ENCODE measurements at regions of chr9 and their contacts with region 1.

Region 1: DNA sequence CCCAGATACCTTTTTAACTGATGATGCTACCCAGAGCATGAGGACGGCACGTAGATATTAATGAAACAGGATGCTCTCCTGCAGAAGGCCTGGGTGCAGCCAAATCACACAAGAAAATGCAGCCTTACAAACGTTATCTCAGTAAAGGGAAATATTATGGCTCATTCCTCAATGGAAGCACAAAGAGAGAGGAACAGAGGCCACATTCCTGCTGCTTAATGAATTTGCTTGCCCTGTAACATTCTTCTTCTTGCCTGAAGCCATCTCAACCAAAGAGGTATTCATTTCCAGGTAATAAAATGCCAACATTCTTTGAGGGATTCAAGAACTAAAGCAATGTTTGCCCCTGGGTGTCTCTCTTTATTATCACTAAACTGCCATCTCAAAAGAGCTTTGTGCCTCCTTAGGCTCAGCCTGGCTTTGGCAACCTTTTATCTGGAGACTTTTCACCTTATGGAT is 93.0 kb downstream of the TNC start:
- DNase-seq: peak; percentile 52 to 68
- H3K4me3 ChIP-seq: no peak overlapping the region
- H3K4me3 Mint-ChIP-seq: no peak overlapping the region
- H3K27ac Mint-ChIP-seq: peak overlapping the region; percentile 62
- H3K4me1 ChIP-seq: peaks cover 58% of the 10 kb centered on the region
- H3K4me1 Mint-ChIP-seq: peaks cover 43% of the 10 kb centered on the region
- H3K27me3 ChIP-seq: no peaks in the 10 kb centered on the region
- H3K27me3 Mint-ChIP-seq: no peaks in the 10 kb centered on the region
- CTCF ChIP-seq: no peak

Region 2: GRCh38 chr9:115058684-115059315 is 33.8 kb after region 1 on chr9:
- CTCF ChIA-PET with region 1: no interaction called
- POLR2A ChIA-PET with region 1: no interaction called
- intact Hi-C with region 1: no loop called
- DNase-seq: no peak
- H3K4me3 ChIP-seq: no peak overlapping the region
- H3K4me3 Mint-ChIP-seq: no peak overlapping the region
- H3K27ac Mint-ChIP-seq: no peak overlapping the region
- H3K4me1 ChIP-seq: no peaks in the 10 kb centered on the region
- H3K4me1 Mint-ChIP-seq: no peaks in the 10 kb centered on the region
- H3K27me3 ChIP-seq: no peaks in the 10 kb centered on the region
- H3K27me3 Mint-ChIP-seq: no peaks in the 10 kb centered on the region
- CTCF ChIP-seq: no peak

Region 3: GRCh38 chr9:115109486-115109885 is 84.5 kb after region 1 on chr9:
- CTCF ChIA-PET with region 1: no interaction called
- POLR2A ChIA-PET with region 1: no interaction called
- intact Hi-C with region 1: loop called (anchors 5 kb)
- DNase-seq: no peak
- H3K4me3 ChIP-seq: no peak overlapping the region
- H3K4me3 Mint-ChIP-seq: no peak overlapping the region
- H3K27ac Mint-ChIP-seq: no peak overlapping the region
- H3K4me1 ChIP-seq: peaks cover 16% of the 10 kb centered on the region; the same call in 1 of the 2 replicates
- H3K4me1 Mint-ChIP-seq: peaks cover 25% of the 10 kb centered on the region
- H3K27me3 ChIP-seq: no peaks in the 10 kb centered on the region
- H3K27me3 Mint-ChIP-seq: no peaks in the 10 kb centered on the region
- CTCF ChIP-seq: no peak

Region 4: GRCh38 chr9:115192835-115193525 is 168.0 kb after region 1 on chr9:
- CTCF ChIA-PET with region 1: no interaction called
- POLR2A ChIA-PET with region 1: no interaction called
- intact Hi-C with region 1: no loop called
- DNase-seq: no peak
- H3K4me3 ChIP-seq: no peak overlapping the region
- H3K4me3 Mint-ChIP-seq: no peak overlapping the region
- H3K27ac Mint-ChIP-seq: no peak overlapping the region
- H3K4me1 ChIP-seq: no peaks in the 10 kb centered on the region
- H3K4me1 Mint-ChIP-seq: no peaks in the 10 kb centered on the region
- H3K27me3 ChIP-seq: no peaks in the 10 kb centered on the region
- H3K27me3 Mint-ChIP-seq: no peaks in the 10 kb centered on the region
- CTCF ChIP-seq: no peak